Breast epithelium (tissue), 4 donors: ENCODE measurements at regions of chr3 and their contacts with region 1.

Region 1: GRCh38 chr3:174116421-174116820 is 718.9 kb downstream of the NLGN1 start:
- DNase-seq: no peak
- H3K4me3 ChIP-seq: no peak overlapping the region
- H3K27ac ChIP-seq: no peak overlapping the region
- H3K4me1 ChIP-seq: no peaks in the 10 kb centered on the region
- H3K27me3 ChIP-seq: no peaks in the 10 kb centered on the region
- CTCF ChIP-seq: no peak
- POLR2A ChIP-seq: no peak

Region 2: DNA sequence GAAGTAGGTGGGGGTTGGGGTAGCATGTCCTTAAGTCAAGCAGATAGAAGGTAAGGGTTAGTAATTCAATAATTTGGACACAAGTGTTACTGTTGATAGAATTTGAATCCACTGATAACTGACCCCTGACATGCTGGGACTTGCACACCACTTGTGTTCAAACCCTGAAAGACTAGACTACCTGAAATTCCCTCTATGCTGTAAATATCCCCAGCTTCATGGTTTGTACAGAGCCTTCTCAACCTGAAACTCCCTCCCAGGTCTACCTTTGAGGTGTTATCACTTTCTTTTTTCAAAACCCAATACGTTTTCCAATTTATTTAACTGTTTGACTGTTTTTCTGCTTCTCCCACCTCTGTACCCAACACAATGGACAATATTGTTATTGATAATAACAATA is 259.3 kb before region 1 on chr3:
- intact Hi-C with region 1: no loop called
- DNase-seq: no peak
- H3K4me3 ChIP-seq: no peak overlapping the region
- H3K27ac ChIP-seq: no peak overlapping the region
- H3K4me1 ChIP-seq: no peaks in the 10 kb centered on the region
- H3K27me3 ChIP-seq: no peaks in the 10 kb centered on the region
- CTCF ChIP-seq: no peak
- POLR2A ChIP-seq: no peak

Region 3: DNA sequence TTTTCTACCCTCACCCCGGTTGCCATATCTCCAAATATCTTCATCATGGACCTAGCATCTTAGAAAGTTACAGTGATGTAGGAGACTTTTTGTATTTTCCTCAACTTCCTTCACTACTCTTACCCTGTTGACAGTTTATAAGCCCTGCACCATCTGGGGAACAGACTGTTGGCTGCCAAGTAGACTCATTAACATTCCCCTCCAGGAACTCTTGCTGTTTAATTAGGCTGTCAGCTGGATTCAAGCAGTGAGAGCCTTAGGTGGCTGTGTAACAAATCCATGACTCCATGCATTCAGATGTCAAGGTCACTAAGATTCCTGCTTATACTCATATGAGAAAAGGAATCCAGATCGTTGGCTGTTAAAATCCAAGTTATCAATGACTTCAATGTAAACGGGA is 941.0 kb after region 1 on chr3:
- intact Hi-C with region 1: loop called (anchors 5 kb)
- DNase-seq: no peak
- H3K4me3 ChIP-seq: no peak overlapping the region
- H3K27ac ChIP-seq: no peak overlapping the region
- H3K4me1 ChIP-seq: no peaks in the 10 kb centered on the region
- H3K27me3 ChIP-seq: no peaks in the 10 kb centered on the region
- CTCF ChIP-seq: no peak
- POLR2A ChIP-seq: no peak